Heart right ventricle (tissue), 16 donors: ENCODE measurements at regions of chr6 and their contacts with region 1.

Region 1: GRCh38 chr6:3990692-3991501 is 88.0 kb downstream of the FAM217A start:
- DNase-seq: peak; percentile 85 to 91
- ATAC-seq: peak; percentile 85 to 97 (median 95)
- H3K4me3 ChIP-seq: peak overlapping the region in 9 of 10 donors; percentile 37 to 57 (median 53)
- H3K27ac ChIP-seq: peak overlapping the region in 8 of 10 donors; percentile 49 to 74 (median 66)
- H3K4me1 ChIP-seq: peaks cover 0 to 25% (median 13%) of the 10 kb centered on the region in 9 donors
- H3K27me3 ChIP-seq: no peaks in the 10 kb centered on the region
- CTCF ChIP-seq: peak; percentile 68 to 94 (median 87)

Region 2: GRCh38 chr6:3471711-3472110 is 519.2 kb before region 1 on chr6:
- intact Hi-C with region 1: loop called in 1 of 10 experiments (anchors 5 kb)
- DNase-seq: no peak
- ATAC-seq: no peak
- H3K4me3 ChIP-seq: no peak overlapping the region
- H3K27ac ChIP-seq: peak overlapping the region in 1 of 10 donors; percentile 73
- H3K4me1 ChIP-seq: peaks cover 0 to 19% (median 6%) of the 10 kb centered on the region in 9 donors
- H3K27me3 ChIP-seq: no peaks in the 10 kb centered on the region
- CTCF ChIP-seq: no peak

Region 3: GRCh38 chr6:3822747-3823450 is 168.0 kb before region 1 on chr6:
- intact Hi-C with region 1: no loop called
- DNase-seq: no peak
- ATAC-seq: no peak
- H3K4me3 ChIP-seq: no peak overlapping the region
- H3K27ac ChIP-seq: no peak overlapping the region
- H3K4me1 ChIP-seq: peaks cover 10 to 54% (median 38%) of the 10 kb centered on the region in 9 donors
- H3K27me3 ChIP-seq: no peaks in the 10 kb centered on the region
- CTCF ChIP-seq: no peak

Region 4: GRCh38 chr6:3899970-3900439 is 90.9 kb before region 1 on chr6:
- intact Hi-C with region 1: no loop called
- DNase-seq: no peak
- ATAC-seq: no peak
- H3K4me3 ChIP-seq: no peak overlapping the region
- H3K27ac ChIP-seq: no peak overlapping the region
- H3K4me1 ChIP-seq: peaks cover 0 to 8% (median 0%) of the 10 kb centered on the region in 9 donors
- H3K27me3 ChIP-seq: no peaks in the 10 kb centered on the region
- CTCF ChIP-seq: no peak

Region 5: DNA sequence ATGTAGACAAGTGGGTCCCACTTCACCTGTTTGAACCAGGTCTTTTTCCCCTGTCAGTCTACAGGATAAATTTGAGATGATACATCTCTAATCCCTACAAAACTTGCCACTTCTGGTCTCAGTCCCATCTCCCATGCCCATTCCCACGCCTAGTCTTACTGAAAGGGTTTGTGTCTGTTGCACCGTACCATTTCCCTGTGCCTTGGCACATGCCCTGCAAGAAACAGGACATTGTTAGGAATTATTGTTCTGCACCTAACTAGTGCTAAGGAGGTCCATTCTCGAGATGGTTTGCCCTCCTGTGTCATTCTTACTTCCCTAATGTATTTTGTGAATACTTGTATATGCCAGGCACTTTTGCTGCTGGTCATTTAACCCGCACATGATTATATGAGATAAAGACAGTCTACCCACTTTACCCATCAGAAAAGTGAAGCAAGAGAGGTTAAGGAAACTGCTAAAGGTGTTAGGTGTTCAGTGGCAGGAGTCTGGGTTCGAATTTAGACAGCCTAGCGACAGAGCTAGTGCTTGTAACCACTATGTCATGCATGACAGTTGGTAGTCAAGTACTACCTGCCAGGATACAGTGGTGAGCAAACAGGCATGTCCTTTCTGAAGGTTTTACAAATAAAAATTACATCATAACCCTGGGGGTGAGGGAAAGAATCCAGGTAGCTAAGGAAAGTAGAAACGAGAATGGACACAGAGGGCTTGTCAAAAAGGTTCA is 75.3 kb after region 1 on chr6:
- intact Hi-C with region 1: no loop called
- DNase-seq: no peak
- ATAC-seq: no peak
- H3K4me3 ChIP-seq: no peak overlapping the region
- H3K27ac ChIP-seq: no peak overlapping the region
- H3K4me1 ChIP-seq: no peaks in the 10 kb centered on the region
- H3K27me3 ChIP-seq: no peaks in the 10 kb centered on the region
- CTCF ChIP-seq: no peak

Region 6: DNA sequence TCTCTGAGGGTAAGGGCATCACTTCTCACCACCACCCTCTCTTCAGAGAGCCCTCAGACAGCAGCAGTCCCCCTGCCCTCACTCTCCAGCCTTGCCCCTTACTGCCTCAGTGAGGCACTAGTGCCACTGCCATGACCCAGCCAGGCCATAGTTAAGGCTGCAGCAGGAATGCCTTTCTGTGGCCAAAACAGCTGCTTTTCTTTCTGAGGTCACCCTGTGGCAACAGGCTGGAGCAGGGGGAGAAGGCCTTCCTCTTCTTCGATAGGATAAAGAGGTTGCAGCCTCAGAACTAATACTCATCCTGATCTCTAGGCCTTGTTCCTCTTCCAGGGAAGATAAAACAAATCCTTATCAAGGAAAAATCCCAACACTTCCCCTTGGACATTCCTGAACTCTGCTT is 201.3 kb after region 1 on chr6:
- intact Hi-C with region 1: no loop called
- DNase-seq: no peak
- ATAC-seq: no peak
- H3K4me3 ChIP-seq: no peak overlapping the region
- H3K27ac ChIP-seq: no peak overlapping the region
- H3K4me1 ChIP-seq: no peaks in the 10 kb centered on the region
- H3K27me3 ChIP-seq: no peaks in the 10 kb centered on the region
- CTCF ChIP-seq: no peak